ENCODE measurements at regions of chr7 and their contacts with region 1.

Region 1: GRCh38 chr7:151759591-151760042 is 117.3 kb downstream of the PRKAG2 start:
- DNase-seq: peak; percentile 64 to 71 (median 67)
- H3K4me3 ChIP-seq: no peak overlapping the region
- H3K27ac ChIP-seq: no peak overlapping the region
- H3K4me1 ChIP-seq: peaks cover 30% of the 10 kb centered on the region
- H3K27me3 ChIP-seq: no peaks in the 10 kb centered on the region
- CTCF ChIP-seq: peak; percentile 79 to 85 (median 84)
- EP300 ChIP-seq: no peak
- POLR2A ChIP-seq: no peak

Region 2: DNA sequence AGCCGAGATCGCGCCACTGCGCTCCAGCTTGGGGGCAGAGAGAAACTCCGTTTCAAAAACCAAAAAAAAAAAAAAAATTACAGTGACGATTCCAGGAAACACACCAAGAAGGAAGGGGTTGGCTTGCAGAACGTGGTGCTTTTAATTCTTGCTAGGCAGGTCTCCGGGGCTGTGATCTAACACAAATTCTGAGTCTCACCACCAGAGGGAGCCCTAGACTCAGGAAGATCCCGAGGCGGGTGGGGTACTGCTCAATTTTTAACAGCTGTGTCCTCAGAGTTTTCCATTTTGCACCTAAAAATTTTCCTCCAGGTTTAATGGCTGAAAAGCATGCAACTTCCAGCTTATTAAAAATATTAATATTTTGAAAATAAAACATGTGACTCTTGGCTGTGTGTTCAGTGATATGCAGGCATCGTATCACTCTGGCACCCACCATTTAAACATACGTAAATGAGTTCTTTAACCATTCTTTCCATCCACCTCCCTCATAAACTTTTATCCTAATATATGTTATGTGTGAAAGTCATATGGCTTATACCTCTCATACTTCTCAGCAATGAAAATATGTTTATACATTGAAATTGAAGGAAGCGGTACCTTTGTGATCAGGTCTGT is 444.5 kb before region 1 on chr7:
- intact Hi-C with region 1: loop called in 1 of 4 experiments (anchors 5 kb)
- DNase-seq: peak; percentile 66 to 80 (median 69)
- H3K4me3 ChIP-seq: no peak overlapping the region
- H3K27ac ChIP-seq: no peak overlapping the region
- H3K4me1 ChIP-seq: no peaks in the 10 kb centered on the region
- H3K27me3 ChIP-seq: no peaks in the 10 kb centered on the region
- CTCF ChIP-seq: peak; percentile 52 to 78 (median 65)
- EP300 ChIP-seq: no peak
- POLR2A ChIP-seq: no peak

Region 3: GRCh38 chr7:151368136-151368571 is 391.5 kb before region 1 on chr7:
- intact Hi-C with region 1: loop called in 2 of 4 experiments (anchors 10 kb)
- DNase-seq: peak; percentile 81 to 89 (median 84)
- H3K4me3 ChIP-seq: no peak overlapping the region
- H3K27ac ChIP-seq: no peak overlapping the region
- H3K4me1 ChIP-seq: no peaks in the 10 kb centered on the region
- H3K27me3 ChIP-seq: no peaks in the 10 kb centered on the region
- CTCF ChIP-seq: peak; percentile 59 to 93 (median 87)
- EP300 ChIP-seq: no peak
- POLR2A ChIP-seq: no peak

Region 4: GRCh38 chr7:151459726-151460473 is 299.7 kb before region 1 on chr7:
- intact Hi-C with region 1: loop called in 1 of 4 experiments (anchors 5 kb)
- DNase-seq: peak; percentile 84 to 90 (median 87)
- H3K4me3 ChIP-seq: peak overlapping the region; percentile 17
- H3K27ac ChIP-seq: peak overlapping the region; percentile 59 to 80
- H3K4me1 ChIP-seq: peaks cover 13% of the 10 kb centered on the region
- H3K27me3 ChIP-seq: no peaks in the 10 kb centered on the region
- CTCF ChIP-seq: peak in 2 of 3 donors; percentile 22 to 48
- EP300 ChIP-seq: peak; percentile 91
- POLR2A ChIP-seq: peak; percentile 13

Region 5: GRCh38 chr7:151519765-151520418 is 239.7 kb before region 1 on chr7 and contains the start of gene RHEB:
- intact Hi-C with region 1: loop called in 1 of 4 experiments (anchors 10 kb)
- DNase-seq: peak; percentile 98 to 99 (median 99)
- H3K4me3 ChIP-seq: peak within 1 kb of the TSS; percentile 72
- H3K27ac ChIP-seq: peak within 1 kb of the TSS; percentile 98 to 100
- H3K4me1 ChIP-seq: peaks cover 14% of the 10 kb centered on the region
- H3K27me3 ChIP-seq: no peaks in the 10 kb centered on the region
- CTCF ChIP-seq: no peak
- EP300 ChIP-seq: no peak
- POLR2A ChIP-seq: peak; percentile 43
- total RNA-seq, gene RHEB: 85.1 to 106 (median 91.8) TPM

Region 6: DNA sequence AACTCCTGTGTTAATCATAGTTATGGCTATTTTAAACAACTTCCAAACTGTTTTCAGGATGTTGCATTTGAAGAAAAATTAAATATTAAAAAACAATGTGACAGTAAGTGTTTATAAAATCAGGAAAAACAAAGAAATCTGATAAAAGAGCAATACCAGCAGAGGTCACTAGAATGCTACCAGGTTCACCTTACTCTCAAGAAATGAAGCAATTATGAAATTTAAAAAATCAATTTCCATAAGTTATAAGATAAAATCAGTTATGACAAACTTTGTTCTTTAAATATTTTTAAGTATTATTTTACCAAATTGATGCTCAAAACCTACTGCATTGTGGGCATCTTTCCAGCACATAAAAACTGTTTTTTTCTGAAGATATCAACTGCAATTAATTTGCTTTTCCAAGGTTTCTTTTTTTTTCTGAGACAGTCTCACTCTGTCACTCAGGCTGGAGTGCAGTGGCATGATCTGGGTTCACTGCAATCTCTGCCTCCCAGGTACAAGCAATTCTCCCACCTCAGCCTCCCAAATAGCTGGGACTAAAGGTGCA is 189.2 kb before region 1 on chr7:
- intact Hi-C with region 1: loop called in 3 of 4 experiments (anchors 5 to 10 kb)
- DNase-seq: no peak
- H3K4me3 ChIP-seq: no peak overlapping the region
- H3K27ac ChIP-seq: no peak overlapping the region
- H3K4me1 ChIP-seq: no peaks in the 10 kb centered on the region
- H3K27me3 ChIP-seq: no peaks in the 10 kb centered on the region
- CTCF ChIP-seq: peak in 1 of 3 donors; percentile 48
- EP300 ChIP-seq: no peak
- POLR2A ChIP-seq: no peak

Region 7: GRCh38 chr7:151631968-151632749 is 127.5 kb before region 1 on chr7:
- intact Hi-C with region 1: loop called in 1 of 4 experiments (anchors 5 kb)
- DNase-seq: peak; percentile 82 to 90 (median 87)
- H3K4me3 ChIP-seq: peak overlapping the region; percentile 76
- H3K27ac ChIP-seq: peak overlapping the region; percentile 72 to 82
- H3K4me1 ChIP-seq: no peaks in the 10 kb centered on the region
- H3K27me3 ChIP-seq: no peaks in the 10 kb centered on the region
- CTCF ChIP-seq: peak; percentile 7 to 54 (median 47)
- EP300 ChIP-seq: no peak
- POLR2A ChIP-seq: peak; percentile 1

Region 8: GRCh38 chr7:151925446-151926335 is 166.1 kb after region 1 on chr7:
- intact Hi-C with region 1: no loop called
- DNase-seq: no peak
- H3K4me3 ChIP-seq: no peak overlapping the region
- H3K27ac ChIP-seq: no peak overlapping the region
- H3K4me1 ChIP-seq: no peaks in the 10 kb centered on the region
- H3K27me3 ChIP-seq: no peaks in the 10 kb centered on the region
- CTCF ChIP-seq: no peak
- EP300 ChIP-seq: no peak
- POLR2A ChIP-seq: no peak

Measured in ovary (tissue), 10 donors.